Psoas muscle (tissue), 8 donors: ENCODE measurements at regions of chr5 and their contacts with region 1.

Region 1: GRCh38 chr5:33997331-33997983 is 10.4 kb downstream of the AMACR start:
- DNase-seq: peak; percentile 63 to 82
- ATAC-seq: peak; percentile 80 to 97 (median 90)
- H3K4me3 ChIP-seq: no peak overlapping the region
- H3K27ac ChIP-seq: no peak overlapping the region
- H3K4me1 ChIP-seq: peaks cover 5% of the 10 kb centered on the region
- H3K27me3 ChIP-seq: no peaks in the 10 kb centered on the region
- CTCF ChIP-seq: peak; percentile 65

Region 2: DNA sequence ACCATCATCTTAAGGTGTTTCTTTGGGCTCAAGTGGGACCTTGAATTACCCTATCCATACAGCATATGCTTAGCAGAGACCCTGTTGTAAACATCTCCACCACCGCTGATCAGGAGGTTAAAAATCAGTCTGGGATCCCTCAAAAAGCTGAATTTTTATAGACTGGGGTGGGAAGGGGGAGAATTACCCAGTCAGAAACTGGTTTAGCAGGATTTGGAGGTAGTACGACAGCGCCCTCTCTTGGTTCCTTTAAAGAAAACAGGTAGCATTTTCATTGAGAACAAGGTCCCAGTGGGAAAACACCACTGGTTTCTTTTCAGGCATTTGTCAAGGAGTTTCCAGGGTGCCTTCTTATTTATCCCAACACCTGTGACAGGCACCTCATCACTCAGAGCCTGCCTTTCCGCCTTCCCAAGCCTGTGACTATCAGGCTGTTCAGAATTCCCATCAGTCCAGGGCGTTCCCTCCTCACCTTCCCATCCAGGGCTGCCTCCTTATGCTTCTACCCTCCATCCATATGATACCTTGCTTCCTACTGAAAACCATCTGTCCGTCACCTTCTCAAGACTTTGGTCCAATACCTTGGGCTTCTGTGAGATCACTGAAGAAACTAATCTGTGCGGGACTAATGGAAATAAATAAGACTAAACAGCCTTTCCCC is 454.8 kb after region 1 on chr5:
- intact Hi-C with region 1: loop called in 1 of 2 experiments (anchors 10 kb)
- DNase-seq: no peak
- ATAC-seq: no peak
- H3K4me3 ChIP-seq: no peak overlapping the region
- H3K27ac ChIP-seq: no peak overlapping the region
- H3K4me1 ChIP-seq: no peaks in the 10 kb centered on the region
- H3K27me3 ChIP-seq: peaks cover 0 to 2% (median 0%) of the 10 kb centered on the region in 3 donors
- CTCF ChIP-seq: no peak

Region 3: GRCh38 chr5:34459908-34460307 is 462.5 kb after region 1 on chr5:
- intact Hi-C with region 1: loop called (anchors 10 kb)
- DNase-seq: no peak
- ATAC-seq: no peak
- H3K4me3 ChIP-seq: no peak overlapping the region
- H3K27ac ChIP-seq: no peak overlapping the region
- H3K4me1 ChIP-seq: no peaks in the 10 kb centered on the region
- H3K27me3 ChIP-seq: no peaks in the 10 kb centered on the region
- CTCF ChIP-seq: no peak